Cardiac septum (tissue), 1 donor: ENCODE measurements at regions of chr10 and their contacts with region 1.

Region 1: DNA sequence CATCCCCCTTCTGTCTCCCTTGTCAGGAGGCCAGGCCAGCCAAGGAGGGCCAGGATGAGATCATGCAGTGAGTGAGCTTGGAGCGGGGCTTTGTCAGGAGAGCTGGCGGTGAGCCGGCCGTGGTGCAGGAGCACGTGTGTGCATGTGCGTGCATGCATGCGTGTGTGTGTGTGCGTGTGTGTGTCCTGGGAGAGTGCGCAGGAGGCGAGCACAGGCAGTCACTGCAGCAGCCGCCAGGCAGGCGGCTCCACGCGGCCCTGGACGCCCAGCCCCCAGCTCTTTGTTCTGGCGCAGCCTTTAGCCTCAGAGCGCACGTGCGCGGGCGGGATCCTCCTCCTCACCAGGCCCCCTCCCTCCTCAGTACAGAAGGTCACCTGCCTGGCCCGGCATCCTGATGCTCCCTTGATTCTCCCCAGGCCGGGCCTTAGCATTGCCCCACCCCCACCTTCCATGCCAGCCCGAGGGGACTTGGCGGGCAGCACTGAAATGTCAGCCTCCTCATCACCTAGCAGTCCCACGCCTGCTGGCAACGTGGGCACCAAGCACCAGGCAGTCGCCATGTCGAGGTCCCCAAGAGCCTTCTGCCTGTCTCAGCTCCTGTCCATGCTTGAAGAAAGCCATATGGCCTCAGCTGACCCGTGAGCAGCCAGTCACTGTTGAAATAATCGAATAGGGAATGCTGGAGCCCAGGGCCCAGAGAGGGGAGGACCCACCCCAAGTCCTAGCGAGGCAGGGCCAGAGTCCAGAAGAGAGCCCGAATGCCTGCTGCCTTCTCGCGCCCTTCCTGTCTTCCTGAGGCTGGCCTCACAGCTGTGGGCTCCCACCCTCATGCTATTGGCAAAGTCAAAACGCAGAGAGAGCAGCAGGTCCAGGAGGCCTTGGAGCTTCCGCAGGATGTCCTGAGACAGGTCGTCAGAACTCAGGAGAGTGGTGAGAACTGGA is 125.9 kb upstream of the PPIF start:
- DNase-seq: peak; percentile 85

Region 2: DNA sequence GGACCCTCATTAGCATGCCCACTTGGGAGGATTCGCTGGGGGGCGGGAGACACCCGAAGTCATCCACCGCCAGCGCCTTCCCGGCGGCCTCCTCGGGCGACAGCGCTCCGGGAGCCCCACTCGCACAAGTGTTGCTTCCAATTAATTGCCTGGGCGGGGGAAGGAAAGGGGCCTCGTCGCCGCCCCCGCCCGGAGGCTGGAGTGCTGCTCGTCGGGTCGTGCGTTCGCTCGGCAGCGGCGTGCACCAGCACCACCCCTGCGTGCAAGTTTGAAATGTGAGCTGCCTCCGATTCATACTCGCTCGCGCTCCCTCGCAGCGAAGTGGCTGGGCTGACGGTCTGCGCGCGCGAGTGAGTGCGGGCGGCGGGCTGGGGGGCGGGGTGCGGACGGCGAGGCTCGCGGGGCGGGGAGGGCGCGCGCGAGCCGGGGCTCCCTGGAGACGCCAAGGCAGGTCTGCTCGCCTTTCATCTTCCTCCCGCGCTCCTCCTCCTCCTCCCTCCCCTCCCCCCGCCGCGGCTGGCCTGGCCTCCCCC is 21.3 kb after region 1 on chr10:
- intact Hi-C with region 1: loop called (anchors 2 kb)
- DNase-seq: peak; percentile 85

Region 3: GRCh38 chr10:79274279-79275104 is 53.1 kb after region 1 on chr10:
- intact Hi-C with region 1: loop called (anchors 1 kb)
- DNase-seq: peak; percentile 93

Region 4: GRCh38 chr10:79322616-79323543 is 101.5 kb after region 1 on chr10:
- intact Hi-C with region 1: no loop called
- DNase-seq: no peak

Region 5: GRCh38 chr10:79347226-79347893 is 126.0 kb after region 1 on chr10 and contains the start of gene PPIF:
- intact Hi-C with region 1: loop called (anchors 5 kb)
- DNase-seq: peak; percentile 98
- total RNA-seq, gene PPIF: 115 TPM